WTC11 (cell line): ENCODE measurements at regions of chr4 and their contacts with region 1.

Region 1: GRCh38 chr4:143581331-143581946 is 67.9 kb downstream of the SMARCA5 start:
- DNase-seq: peak; percentile 43
- ATAC-seq: peak; percentile 95
- H3K4me3 Mint-ChIP-seq: no peak overlapping the region
- H3K27ac Mint-ChIP-seq: no peak overlapping the region
- H3K4me1 Mint-ChIP-seq: no peaks in the 10 kb centered on the region
- H3K27me3 Mint-ChIP-seq: no peaks in the 10 kb centered on the region
- CTCF ChIP-seq: no peak

Region 2: DNA sequence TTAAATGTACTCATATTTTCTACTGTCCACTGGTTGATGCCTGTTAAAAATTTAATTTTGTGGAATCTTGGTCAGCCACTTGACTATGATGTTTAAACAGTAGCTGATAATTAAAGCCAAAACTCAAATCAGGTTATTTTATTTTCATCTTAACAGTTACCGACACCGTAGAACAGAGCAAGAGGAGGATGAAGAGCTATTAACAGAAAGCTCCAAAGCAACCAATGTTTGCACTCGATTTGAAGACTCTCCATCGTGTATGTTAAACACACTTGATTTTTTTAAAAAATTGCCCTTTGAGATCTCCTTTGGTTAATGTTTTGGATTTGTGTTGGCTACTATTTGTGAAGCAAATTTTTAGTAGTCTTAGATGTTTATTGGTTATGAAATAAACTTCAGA is 57.2 kb before region 1 on chr4:
- CTCF ChIA-PET with region 1: no interaction called
- POLR2A ChIA-PET with region 1: no interaction called
- DNase-seq: no peak
- ATAC-seq: no peak
- H3K4me3 Mint-ChIP-seq: no peak overlapping the region
- H3K27ac Mint-ChIP-seq: no peak overlapping the region
- H3K4me1 Mint-ChIP-seq: peaks cover 3% of the 10 kb centered on the region; the same call in 1 of the 2 replicates
- H3K27me3 Mint-ChIP-seq: no peaks in the 10 kb centered on the region
- CTCF ChIP-seq: no peak

Region 3: DNA sequence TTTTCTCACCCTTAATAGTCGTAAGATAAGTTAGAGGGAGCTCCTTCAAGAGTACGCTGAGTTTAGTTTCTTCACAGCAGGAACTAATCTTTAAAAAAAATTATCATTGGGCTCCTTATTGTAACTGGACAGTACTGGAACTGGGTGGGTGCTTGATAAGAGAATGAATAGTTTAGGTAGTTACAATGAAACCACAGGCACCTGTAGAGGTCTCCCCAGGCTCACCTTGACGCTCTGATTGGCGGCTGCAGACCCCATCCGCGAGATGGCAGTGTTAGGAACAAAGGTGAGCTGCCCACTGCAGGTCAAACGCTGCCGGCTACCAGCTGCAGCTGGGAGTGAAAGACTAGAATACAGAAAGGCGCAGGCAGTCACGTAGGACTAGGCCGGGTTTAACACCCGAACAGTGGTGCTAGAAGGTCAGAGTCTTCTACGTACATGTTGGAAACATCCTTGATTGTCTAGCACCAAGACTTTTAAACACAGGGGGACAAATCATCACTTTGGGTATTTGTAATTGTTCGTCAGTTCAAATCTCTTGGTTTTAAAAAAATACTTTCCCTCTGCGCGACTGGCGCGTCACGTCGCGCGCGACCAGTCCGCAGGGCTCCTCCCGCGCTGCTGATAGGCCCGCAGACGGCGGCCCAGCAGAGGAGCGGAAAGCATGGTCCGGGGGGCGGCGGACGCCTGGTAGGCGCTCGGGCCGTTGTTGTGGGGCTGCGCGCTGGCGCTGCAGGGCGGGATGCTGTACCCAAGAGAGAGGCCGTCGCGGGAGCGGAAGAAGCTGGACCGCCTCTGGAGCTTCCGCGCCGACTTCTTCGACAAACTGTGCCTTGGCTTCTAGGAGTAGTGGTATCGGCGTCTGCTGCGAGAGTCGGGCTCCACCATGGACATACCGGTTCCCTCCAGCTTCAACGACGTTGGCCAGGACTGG is 22.3 kb before region 1 on chr4:
- CTCF ChIA-PET with region 1: interaction called, 51 read pairs
- POLR2A ChIA-PET with region 1: interaction called, 7 read pairs
- DNase-seq: peak; percentile 86
- ATAC-seq: peak; percentile 98
- H3K4me3 Mint-ChIP-seq: peak overlapping the region; percentile 83
- H3K27ac Mint-ChIP-seq: peak overlapping the region; percentile 94
- H3K4me1 Mint-ChIP-seq: peaks cover 9% of the 10 kb centered on the region
- H3K27me3 Mint-ChIP-seq: peaks cover 18% of the 10 kb centered on the region
- CTCF ChIP-seq: peak; percentile 40; the same call in 1 of the 2 replicates